A673 (cell line): ENCODE measurements at regions of chr18 and their contacts with region 1.

Region 1: GRCh38 chr18:47050468-47050867 is 15.0 kb upstream of the ELOA2 start:
- DNase-seq: peak; percentile 59
- H3K4me3 ChIP-seq: no peak overlapping the region
- H3K27ac ChIP-seq: no peak overlapping the region
- H3K4me1 ChIP-seq: no peaks in the 10 kb centered on the region
- H3K27me3 ChIP-seq: no peaks in the 10 kb centered on the region
- CTCF ChIP-seq: peak; percentile 82

Region 2: DNA sequence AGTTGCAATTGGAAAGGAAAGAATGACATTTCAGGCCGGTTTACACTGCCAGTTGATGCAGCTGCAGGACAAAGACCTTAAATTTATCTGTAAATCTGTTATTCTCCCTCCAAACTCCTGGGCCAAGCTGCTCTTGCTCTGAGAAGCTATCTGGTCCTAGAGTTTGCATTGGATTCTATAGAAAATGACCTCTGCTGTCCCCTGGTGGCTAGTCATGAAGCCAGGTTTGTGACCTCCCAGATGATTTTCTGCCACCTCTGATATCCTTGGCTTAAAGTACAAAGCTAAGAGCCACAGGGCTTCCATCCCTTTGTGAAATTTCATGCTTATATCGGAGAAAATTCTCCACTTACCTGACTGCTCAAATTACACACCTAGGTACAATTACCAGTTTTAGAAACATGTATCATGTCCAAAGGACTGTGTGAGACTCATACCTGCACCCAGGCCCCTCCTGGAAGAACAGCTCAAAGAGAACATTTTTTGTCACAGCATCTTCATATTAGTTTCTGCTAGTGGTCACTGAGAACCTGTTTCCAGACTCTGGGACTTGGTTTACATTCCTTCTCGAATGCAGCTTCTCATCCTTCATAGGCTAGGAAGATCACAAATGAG is 154.5 kb after region 1 on chr18:
- CTCF ChIA-PET with region 1: interaction called, 4 read pairs
- POLR2A ChIA-PET with region 1: no interaction called
- intact Hi-C with region 1: loop called (anchors 5 kb)
- DNase-seq: peak; percentile 35
- H3K4me3 ChIP-seq: no peak overlapping the region
- H3K27ac ChIP-seq: no peak overlapping the region
- H3K4me1 ChIP-seq: no peaks in the 10 kb centered on the region
- H3K27me3 ChIP-seq: peaks cover 61% of the 10 kb centered on the region
- CTCF ChIP-seq: peak; percentile 64